Aorta (tissue), 5 donors: ENCODE measurements at regions of chr3 and their contacts with region 1.

Region 1: GRCh38 chr3:50189274-50189673 is 2.1 kb upstream of the GNAT1 start:
- DNase-seq: peak; percentile 84 to 91
- ATAC-seq: peak; percentile 70
- H3K4me3 ChIP-seq: no peak overlapping the region
- H3K27ac ChIP-seq: no peak overlapping the region
- H3K4me1 ChIP-seq: no peaks in the 10 kb centered on the region
- H3K27me3 ChIP-seq: no peaks in the 10 kb centered on the region

Region 2: GRCh38 chr3:50050361-50050760 is 138.9 kb before region 1 on chr3:
- intact Hi-C with region 1: no loop called
- DNase-seq: no peak
- ATAC-seq: no peak
- H3K4me3 ChIP-seq: no peak overlapping the region
- H3K27ac ChIP-seq: no peak overlapping the region
- H3K4me1 ChIP-seq: no peaks in the 10 kb centered on the region
- H3K27me3 ChIP-seq: no peaks in the 10 kb centered on the region

Region 3: GRCh38 chr3:50121416-50122032 is 67.8 kb before region 1 on chr3:
- intact Hi-C with region 1: loop called (anchors 1 kb)
- DNase-seq: peak; percentile 85 to 94
- ATAC-seq: peak; percentile 87
- H3K4me3 ChIP-seq: no peak overlapping the region
- H3K27ac ChIP-seq: no peak overlapping the region
- H3K4me1 ChIP-seq: no peaks in the 10 kb centered on the region
- H3K27me3 ChIP-seq: no peaks in the 10 kb centered on the region